ENCODE measurements at regions of chr5 and their contacts with region 1.

Region 1: GRCh38 chr5:73693481-73694061 is 67.6 kb downstream of the ARHGEF28 start:
- DNase-seq: peak; percentile 80
- H3K4me3 ChIP-seq: no peak overlapping the region
- H3K27ac ChIP-seq: peak overlapping the region; percentile 20
- H3K4me1 ChIP-seq: peaks cover 67% of the 10 kb centered on the region
- H3K27me3 ChIP-seq: no peaks in the 10 kb centered on the region
- CTCF ChIP-seq: peak; percentile 52 to 62
- POLR2A ChIP-seq: no peak

Region 2: GRCh38 chr5:72733810-72734209 is 959.8 kb before region 1 on chr5:
- CTCF ChIA-PET with region 1: no interaction called
- POLR2A ChIA-PET with region 1: no interaction called
- dilution Hi-C with region 1: no loop called
- intact Hi-C with region 1: no loop called
- DNase-seq: no peak
- H3K4me3 ChIP-seq: no peak overlapping the region
- H3K27ac ChIP-seq: no peak overlapping the region
- H3K4me1 ChIP-seq: no peaks in the 10 kb centered on the region
- H3K27me3 ChIP-seq: no peaks in the 10 kb centered on the region
- CTCF ChIP-seq: no peak
- POLR2A ChIP-seq: no peak

Region 3: DNA sequence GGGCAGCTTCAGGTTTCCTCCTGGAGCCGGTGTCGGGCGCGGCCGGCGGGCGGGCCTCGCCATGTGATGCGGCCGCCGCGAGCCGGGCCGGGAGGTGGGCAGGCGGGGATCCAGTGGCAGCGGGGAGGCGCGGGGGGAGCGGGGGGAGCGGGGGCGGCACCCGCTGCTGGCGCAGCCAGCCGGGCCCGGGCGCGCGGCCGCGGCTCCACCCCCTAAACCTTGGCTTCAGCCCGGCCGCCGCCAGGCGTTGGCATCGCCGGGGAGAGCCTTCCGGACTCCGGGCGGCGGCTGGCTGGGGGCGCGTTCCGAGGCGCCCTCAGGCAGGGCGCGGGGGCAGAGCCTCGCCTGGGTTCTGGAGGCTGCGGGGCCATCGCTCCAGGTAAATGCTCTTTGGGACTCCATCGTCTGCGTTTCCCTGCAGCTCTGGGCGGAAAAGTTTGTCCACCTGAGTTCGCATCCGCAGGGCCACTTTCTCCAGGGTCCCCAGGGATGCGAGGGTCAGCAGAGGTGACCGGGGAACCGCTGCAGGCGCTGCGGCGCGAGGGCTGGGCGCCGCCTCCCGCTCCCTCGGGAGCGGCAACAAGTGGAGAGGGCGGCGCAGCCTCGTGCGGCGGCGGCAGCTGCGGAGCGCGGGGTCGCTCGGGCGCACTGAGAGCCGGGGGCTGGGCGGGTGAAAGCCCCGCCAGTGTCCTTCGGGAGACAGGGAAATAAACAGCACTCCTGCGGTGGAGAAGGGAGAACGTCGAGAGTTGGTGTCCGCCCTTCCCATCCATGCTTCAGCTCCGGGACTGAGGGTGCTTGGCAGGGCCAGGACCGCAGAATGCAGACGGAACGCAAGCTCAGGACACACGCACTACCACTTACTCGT is 67.4 kb before region 1 on chr5 and contains the start of gene ARHGEF28:
- CTCF ChIA-PET with region 1: interaction called, 8 read pairs
- POLR2A ChIA-PET with region 1: interaction called, 4 read pairs
- dilution Hi-C with region 1: no loop called
- intact Hi-C with region 1: loop called (anchors 1 kb)
- DNase-seq: peak; percentile 47
- H3K4me3 ChIP-seq: peak within 1 kb of the TSS; percentile 48 to 83 (median 74)
- H3K27ac ChIP-seq: peak within 1 kb of the TSS; percentile 81
- H3K4me1 ChIP-seq: peaks cover 40% of the 10 kb centered on the region
- H3K27me3 ChIP-seq: no peaks in the 10 kb centered on the region
- CTCF ChIP-seq: no peak
- POLR2A ChIP-seq: peak; percentile 92
- total RNA-seq, gene ARHGEF28: 108 and 116 TPM in 2 replicates

Region 4: GRCh38 chr5:73638344-73639095 is 55.1 kb before region 1 on chr5:
- CTCF ChIA-PET with region 1: interaction called, 9 read pairs
- POLR2A ChIA-PET with region 1: interaction called, 3 read pairs
- dilution Hi-C with region 1: no loop called
- intact Hi-C with region 1: loop called (anchors 2 kb)
- DNase-seq: peak; percentile 95
- H3K4me3 ChIP-seq: peak overlapping the region in 1 of 3 experiments; percentile 27
- H3K27ac ChIP-seq: peak overlapping the region; percentile 97
- H3K4me1 ChIP-seq: peaks cover 77% of the 10 kb centered on the region
- H3K27me3 ChIP-seq: no peaks in the 10 kb centered on the region
- CTCF ChIP-seq: no peak
- POLR2A ChIP-seq: peak; percentile 75

Region 5: GRCh38 chr5:73673161-73673591 is 20.4 kb before region 1 on chr5:
- CTCF ChIA-PET with region 1: interaction called, 36 read pairs
- POLR2A ChIA-PET with region 1: interaction called, 3 read pairs
- dilution Hi-C with region 1: no loop called
- intact Hi-C with region 1: loop called (anchors 2 kb)
- DNase-seq: peak; percentile 91
- H3K4me3 ChIP-seq: no peak overlapping the region
- H3K27ac ChIP-seq: peak overlapping the region; percentile 74
- H3K4me1 ChIP-seq: peaks cover 33% of the 10 kb centered on the region
- H3K27me3 ChIP-seq: no peaks in the 10 kb centered on the region
- CTCF ChIP-seq: peak in 1 of 2 donors; percentile 6
- POLR2A ChIP-seq: no peak

Region 6: GRCh38 chr5:73709536-73710129 is 16.1 kb after region 1 on chr5:
- CTCF ChIA-PET with region 1: interaction called, 21 read pairs
- POLR2A ChIA-PET with region 1: no interaction called
- dilution Hi-C with region 1: no loop called
- intact Hi-C with region 1: no loop called
- DNase-seq: peak; percentile 46
- H3K4me3 ChIP-seq: no peak overlapping the region
- H3K27ac ChIP-seq: no peak overlapping the region
- H3K4me1 ChIP-seq: peaks cover 10% of the 10 kb centered on the region
- H3K27me3 ChIP-seq: no peaks in the 10 kb centered on the region
- CTCF ChIP-seq: no peak
- POLR2A ChIP-seq: no peak

Region 7: DNA sequence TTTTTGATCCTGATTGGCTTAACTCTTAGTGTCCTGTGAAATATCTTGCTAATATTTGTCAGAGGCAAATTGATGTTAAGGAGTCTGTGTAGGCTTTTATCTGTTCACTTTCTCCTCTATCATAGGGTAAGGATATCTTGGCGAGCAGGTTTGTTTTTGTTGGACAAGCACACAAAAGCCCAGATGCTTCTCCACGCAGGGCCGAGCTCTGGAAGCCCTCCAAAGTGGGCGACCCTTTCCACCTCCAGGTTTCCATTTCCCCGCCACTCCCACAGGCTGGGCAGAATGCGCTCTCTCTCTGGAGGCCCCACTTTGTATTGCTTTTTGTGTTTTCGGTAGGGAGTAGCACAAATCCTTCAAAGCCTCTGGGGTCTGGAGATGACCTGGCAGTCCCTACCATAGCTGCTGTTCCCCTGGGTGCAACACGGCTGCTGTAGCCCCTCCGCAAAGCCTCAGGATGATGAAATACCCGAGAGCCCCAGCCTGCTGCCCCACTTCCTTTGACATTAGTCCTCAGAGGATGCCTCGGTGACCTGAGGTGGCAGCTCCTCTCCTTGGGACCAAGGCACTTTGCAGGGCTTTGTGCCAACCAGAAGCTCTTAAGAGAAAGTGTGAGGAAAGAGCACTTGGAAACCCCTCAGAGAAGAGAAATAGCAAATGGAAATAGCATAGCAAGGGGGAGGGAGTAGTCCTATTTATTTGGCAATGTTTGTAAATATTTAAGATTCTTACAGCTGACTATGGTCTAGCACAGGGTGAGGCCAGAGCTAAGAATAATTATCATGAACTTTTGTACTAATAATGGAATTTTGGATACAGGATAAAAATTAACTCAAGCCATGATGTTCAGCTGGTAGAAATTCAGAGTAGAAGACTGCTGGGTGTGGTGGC is 55.2 kb after region 1 on chr5:
- CTCF ChIA-PET with region 1: interaction called, 16 read pairs
- POLR2A ChIA-PET with region 1: no interaction called
- dilution Hi-C with region 1: no loop called
- intact Hi-C with region 1: no loop called
- DNase-seq: peak; percentile 89
- H3K4me3 ChIP-seq: peak overlapping the region in 1 of 3 experiments; percentile 42
- H3K27ac ChIP-seq: peak overlapping the region; percentile 48
- H3K4me1 ChIP-seq: peaks cover 68% of the 10 kb centered on the region
- H3K27me3 ChIP-seq: no peaks in the 10 kb centered on the region
- CTCF ChIP-seq: no peak
- POLR2A ChIP-seq: no peak

Measured in endothelial cell of umbilical vein (primary cell).